Heart left ventricle (tissue), 16 donors: ENCODE measurements at regions of chr2 and their contacts with region 1.

Region 1: DNA sequence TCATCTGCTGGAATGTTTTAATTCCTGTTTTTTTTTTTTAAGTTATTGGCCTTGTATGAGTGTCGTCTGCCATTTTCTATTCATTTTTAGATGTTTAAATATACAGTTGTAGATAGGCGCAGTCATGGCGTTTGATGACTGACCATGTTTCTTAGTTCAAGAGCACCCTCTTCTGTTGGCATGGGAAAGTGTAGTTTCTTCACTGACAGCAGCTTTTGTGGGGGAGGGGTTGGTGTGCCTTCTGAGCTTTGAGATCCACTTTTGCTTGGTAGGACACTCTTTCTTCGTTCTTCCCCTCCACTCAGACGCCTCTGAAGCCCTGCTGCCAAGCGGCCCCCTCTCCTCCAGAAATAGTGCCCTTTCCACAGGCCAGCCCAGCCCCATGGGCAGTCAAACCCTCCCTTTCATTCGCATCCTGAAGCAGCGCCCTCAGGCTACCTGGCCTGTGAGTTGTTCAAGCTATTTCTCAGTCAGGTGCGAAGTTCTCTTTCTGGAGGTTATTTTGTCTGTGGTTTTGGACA is 492.0 kb downstream of the TNS1 start:
- DNase-seq: peak in 4 of 5 donors; percentile 39 to 77 (median 62)
- ATAC-seq: peak; percentile 88 to 93 (median 91)
- H3K4me3 ChIP-seq: no peak overlapping the region
- H3K27ac ChIP-seq: peak overlapping the region in 2 of 12 donors; percentile 2 to 16
- H3K4me1 ChIP-seq: peaks cover 0 to 24% (median 5%) of the 10 kb centered on the region in 12 donors
- H3K27me3 ChIP-seq: no peaks in the 10 kb centered on the region
- CTCF ChIP-seq: peak; percentile 30 to 82 (median 72)
- POLR2A ChIP-seq: no peak

Region 2: GRCh38 chr2:216989340-216990129 is 521.3 kb before region 1 on chr2:
- intact Hi-C with region 1: loop called in 4 of 10 experiments (anchors 5 to 10 kb)
- DNase-seq: no peak
- ATAC-seq: peak in 1 of 4 donors; percentile 43
- H3K4me3 ChIP-seq: no peak overlapping the region
- H3K27ac ChIP-seq: no peak overlapping the region
- H3K4me1 ChIP-seq: peaks cover 0 to 29% (median 8%) of the 10 kb centered on the region in 12 donors
- H3K27me3 ChIP-seq: no peaks in the 10 kb centered on the region
- CTCF ChIP-seq: peak in 6 of 12 donors; percentile 4 to 28 (median 22)
- POLR2A ChIP-seq: no peak

Region 3: DNA sequence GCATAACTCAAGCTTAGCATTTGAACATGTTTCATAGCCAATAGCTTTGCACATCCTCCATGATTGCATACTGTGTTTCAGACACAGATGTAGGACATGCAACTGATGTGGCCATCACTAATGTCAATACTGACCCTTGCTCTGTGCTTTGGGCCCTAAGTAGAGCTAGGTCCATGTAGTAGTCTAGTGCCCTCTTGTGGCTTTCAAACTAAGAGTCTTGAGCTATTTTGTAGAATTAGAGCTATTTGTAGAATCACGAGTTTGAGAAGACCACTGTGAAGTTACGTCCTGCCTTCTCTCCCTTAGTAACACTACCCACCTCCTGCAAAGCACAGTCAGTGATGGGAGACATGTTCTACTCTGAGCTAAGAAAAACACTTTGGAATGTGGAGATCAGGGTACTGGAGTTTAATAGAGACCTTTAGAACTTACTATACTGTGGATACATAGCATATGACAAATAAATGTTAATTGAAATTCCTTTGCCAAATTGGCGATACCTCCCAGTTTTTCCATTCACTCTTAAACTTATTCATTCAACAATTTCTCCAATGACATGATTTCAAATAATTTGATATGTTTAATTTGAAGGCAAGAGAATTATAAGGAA is 344.5 kb before region 1 on chr2:
- intact Hi-C with region 1: loop called in 7 of 10 experiments (anchors 1 to 10 kb)
- DNase-seq: peak in 1 of 5 donors; percentile 22
- ATAC-seq: peak; percentile 55 to 81 (median 68)
- H3K4me3 ChIP-seq: no peak overlapping the region
- H3K27ac ChIP-seq: no peak overlapping the region
- H3K4me1 ChIP-seq: peaks cover 0 to 24% (median 6%) of the 10 kb centered on the region in 12 donors
- H3K27me3 ChIP-seq: peaks cover 0 to 52% (median 0%) of the 10 kb centered on the region in 9 donors
- CTCF ChIP-seq: peak; percentile 51 to 82 (median 64)
- POLR2A ChIP-seq: no peak

Region 4: GRCh38 chr2:217756375-217757107 is 245.7 kb after region 1 on chr2:
- intact Hi-C with region 1: loop called in 2 of 10 experiments (anchors 5 to 10 kb)
- DNase-seq: peak; percentile 65 to 84 (median 74)
- ATAC-seq: peak; percentile 76 to 91 (median 86)
- H3K4me3 ChIP-seq: peak overlapping the region in 8 of 12 donors; percentile 11 to 39 (median 31)
- H3K27ac ChIP-seq: peak overlapping the region in 1 of 12 donors; percentile 26
- H3K4me1 ChIP-seq: peaks cover 0 to 24% (median 7%) of the 10 kb centered on the region in 12 donors
- H3K27me3 ChIP-seq: peaks cover 0 to 6% (median 0%) of the 10 kb centered on the region in 9 donors
- CTCF ChIP-seq: peak; percentile 87 to 98 (median 94)
- POLR2A ChIP-seq: no peak